WTC11 (cell line): ENCODE measurements at regions of chr11 and their contacts with region 1.

Region 1: DNA sequence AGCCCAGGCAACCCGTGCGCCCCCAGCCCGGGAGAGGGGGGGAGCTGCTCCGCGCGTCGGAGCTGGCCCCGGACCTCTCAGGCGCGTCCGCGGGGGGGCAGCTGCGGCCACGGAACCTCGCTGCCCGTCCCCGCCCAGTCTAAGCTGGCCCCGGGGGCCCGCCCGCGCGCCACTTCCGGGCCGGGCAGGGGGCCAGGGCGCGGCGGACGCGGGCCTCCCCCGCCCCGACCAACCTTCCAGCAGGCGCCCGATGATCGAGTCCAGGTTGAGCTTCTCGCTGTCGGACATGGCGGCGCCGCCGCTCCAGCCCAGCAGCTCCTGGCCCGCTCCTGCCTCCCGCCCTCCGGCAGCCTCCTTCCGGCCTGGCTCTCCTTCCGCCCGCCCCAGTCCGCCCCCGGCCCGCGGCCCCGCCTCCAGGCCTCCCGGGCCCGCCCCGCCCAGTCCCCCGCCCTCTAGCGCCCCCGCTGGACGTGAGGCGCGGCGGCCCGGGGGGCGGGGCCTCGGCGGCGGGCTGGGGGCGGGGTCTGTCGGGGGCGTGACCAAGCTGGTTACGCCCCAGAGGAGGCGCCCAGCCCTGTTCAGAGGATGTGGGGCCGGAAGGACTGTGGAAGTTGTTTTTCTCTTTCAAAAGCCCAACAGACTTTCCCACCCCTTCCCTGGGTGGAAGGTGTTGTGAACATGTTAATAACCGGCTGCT is at the start of gene PPP1CA:
- DNase-seq: peak; percentile 88
- ATAC-seq: peak; percentile 86
- H3K4me3 Mint-ChIP-seq: peak within 1 kb of the TSS; percentile 73
- H3K27ac Mint-ChIP-seq: peak within 1 kb of the TSS; percentile 78
- H3K4me1 Mint-ChIP-seq: peaks cover 34% of the 10 kb centered on the region
- H3K27me3 Mint-ChIP-seq: no peaks in the 10 kb centered on the region
- CTCF ChIP-seq: peak; percentile 46
- total RNA-seq, gene PPP1CA: 220 to 222 TPM (median 221 TPM) in 3 replicates

Region 2: DNA sequence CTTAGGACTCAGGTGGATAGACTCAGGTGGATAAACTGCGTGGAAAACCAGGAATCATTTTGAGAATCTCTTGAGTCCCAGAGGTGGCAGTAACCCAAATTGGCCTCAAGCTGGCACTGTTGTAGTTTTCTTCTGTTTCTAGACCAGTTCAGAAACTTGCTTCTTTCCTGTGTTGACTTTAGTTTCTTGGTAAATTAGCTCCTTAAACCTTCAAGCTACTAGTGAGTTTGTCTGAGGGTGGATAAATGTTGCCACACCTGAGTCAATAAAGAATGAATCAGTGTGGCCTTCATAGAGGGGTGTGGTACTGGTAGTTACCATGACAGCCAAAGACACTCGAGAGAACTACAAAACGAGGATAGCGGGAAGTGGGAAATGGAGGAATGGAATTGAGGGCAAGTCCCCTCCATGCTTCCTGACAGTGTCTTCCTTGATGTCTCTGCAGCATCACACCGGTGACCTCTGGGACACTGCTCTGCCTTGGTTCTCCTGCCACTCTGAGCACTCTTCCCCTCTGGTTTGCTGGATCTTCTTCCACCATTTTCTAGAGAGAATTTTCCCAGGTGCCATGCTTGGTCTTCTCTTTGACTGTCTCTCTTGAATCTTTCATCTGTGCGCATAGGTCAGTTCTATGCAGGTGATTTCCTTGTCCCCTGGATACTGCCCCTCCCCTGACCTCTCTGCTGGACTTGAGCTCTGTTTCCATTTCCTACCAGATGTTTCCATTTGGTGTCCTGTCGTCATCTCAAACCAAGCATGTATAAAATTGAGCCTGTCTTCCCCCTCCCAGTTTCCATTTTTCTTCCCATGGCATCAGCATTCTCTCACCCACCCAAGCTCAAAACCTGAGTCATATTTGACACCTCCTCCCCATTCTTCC is 55.5 kb before region 1 on chr11:
- CTCF ChIA-PET with region 1: interaction called, 23 read pairs
- POLR2A ChIA-PET with region 1: no interaction called
- DNase-seq: no peak
- ATAC-seq: peak; percentile 82
- H3K4me3 Mint-ChIP-seq: no peak overlapping the region
- H3K27ac Mint-ChIP-seq: peak overlapping the region; percentile 41; the same call in 1 of the 2 replicates
- H3K4me1 Mint-ChIP-seq: peaks cover 9% of the 10 kb centered on the region
- H3K27me3 Mint-ChIP-seq: peaks cover 10% of the 10 kb centered on the region
- CTCF ChIP-seq: 0 out of 2 replicates have a peak, but pooled peaks have one; percentile 43

Region 3: GRCh38 chr11:67373925-67374618 is 27.6 kb before region 1 on chr11:
- CTCF ChIA-PET with region 1: interaction called, 19 read pairs
- POLR2A ChIA-PET with region 1: interaction called, 4 read pairs
- DNase-seq: peak; percentile 77
- ATAC-seq: peak; percentile 6
- H3K4me3 Mint-ChIP-seq: peak overlapping the region; percentile 88
- H3K27ac Mint-ChIP-seq: no peak overlapping the region
- H3K4me1 Mint-ChIP-seq: peaks cover 46% of the 10 kb centered on the region
- H3K27me3 Mint-ChIP-seq: peaks cover 82% of the 10 kb centered on the region
- CTCF ChIP-seq: peak; percentile 32; the same call in 1 of the 2 replicates

Region 4: DNA sequence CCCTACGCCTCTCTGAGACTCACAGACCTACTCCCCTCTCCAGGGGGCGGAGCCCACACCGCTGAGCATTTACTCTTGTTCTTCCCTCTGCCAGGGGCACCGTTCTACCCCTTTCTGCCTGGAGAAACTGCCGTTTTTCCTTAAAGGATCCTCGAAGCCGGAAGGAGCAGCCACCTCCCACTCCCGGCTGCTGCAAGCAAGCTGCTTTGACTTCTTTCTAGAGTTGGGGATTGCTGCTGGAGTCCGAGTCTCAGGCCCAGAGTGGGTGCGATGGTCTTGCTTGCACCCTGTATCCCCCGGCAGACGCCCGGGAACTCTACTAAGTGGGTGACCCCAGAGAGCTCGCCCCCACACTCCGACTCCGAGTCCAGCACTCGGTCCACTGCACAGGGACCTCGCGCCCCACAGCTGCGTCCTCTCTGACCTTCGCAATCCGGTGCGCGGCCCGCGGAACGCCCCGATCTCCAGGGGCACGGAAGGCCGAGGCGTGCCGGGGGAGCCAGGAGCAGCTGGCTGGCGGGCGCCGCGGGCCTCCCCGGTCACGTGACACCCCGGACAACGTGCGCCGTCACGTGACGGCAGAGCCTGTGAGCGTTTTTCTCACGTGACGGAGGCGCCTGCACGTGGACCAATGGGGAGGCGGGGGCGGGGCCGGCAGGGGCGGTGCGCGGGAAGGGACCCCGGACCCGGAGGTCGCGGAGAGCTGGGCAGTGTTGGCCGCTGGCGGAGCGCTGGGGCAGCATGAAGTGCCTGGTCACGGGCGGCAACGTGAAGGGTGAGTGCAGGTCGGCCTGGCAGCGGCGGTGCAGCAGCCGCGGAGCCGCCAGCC is 10.1 kb before region 1 on chr11 and contains the start of gene RAD9A:
- CTCF ChIA-PET with region 1: interaction called, 112 read pairs
- POLR2A ChIA-PET with region 1: interaction called, 21 read pairs
- DNase-seq: peak; percentile 93
- ATAC-seq: peak; percentile 52
- H3K4me3 Mint-ChIP-seq: peak within 1 kb of the TSS; percentile 75
- H3K27ac Mint-ChIP-seq: peak within 1 kb of the TSS; percentile 85
- H3K4me1 Mint-ChIP-seq: peaks cover 35% of the 10 kb centered on the region
- H3K27me3 Mint-ChIP-seq: no peaks in the 10 kb centered on the region
- CTCF ChIP-seq: no peak
- total RNA-seq, gene RAD9A: 25.7 to 45.5 TPM (median 26.7 TPM) in 3 replicates

Region 5: GRCh38 chr11:67420646-67421420 is 19.2 kb after region 1 on chr11:
- CTCF ChIA-PET with region 1: interaction called, 45 read pairs
- POLR2A ChIA-PET with region 1: interaction called, 11 read pairs
- DNase-seq: peak; percentile 99
- ATAC-seq: peak; percentile 96
- H3K4me3 Mint-ChIP-seq: peak overlapping the region; percentile 63
- H3K27ac Mint-ChIP-seq: peak overlapping the region; percentile 77
- H3K4me1 Mint-ChIP-seq: peaks cover 19% of the 10 kb centered on the region
- H3K27me3 Mint-ChIP-seq: peaks cover 6% of the 10 kb centered on the region; the same call in 1 of the 2 replicates
- CTCF ChIP-seq: no peak

Region 6: DNA sequence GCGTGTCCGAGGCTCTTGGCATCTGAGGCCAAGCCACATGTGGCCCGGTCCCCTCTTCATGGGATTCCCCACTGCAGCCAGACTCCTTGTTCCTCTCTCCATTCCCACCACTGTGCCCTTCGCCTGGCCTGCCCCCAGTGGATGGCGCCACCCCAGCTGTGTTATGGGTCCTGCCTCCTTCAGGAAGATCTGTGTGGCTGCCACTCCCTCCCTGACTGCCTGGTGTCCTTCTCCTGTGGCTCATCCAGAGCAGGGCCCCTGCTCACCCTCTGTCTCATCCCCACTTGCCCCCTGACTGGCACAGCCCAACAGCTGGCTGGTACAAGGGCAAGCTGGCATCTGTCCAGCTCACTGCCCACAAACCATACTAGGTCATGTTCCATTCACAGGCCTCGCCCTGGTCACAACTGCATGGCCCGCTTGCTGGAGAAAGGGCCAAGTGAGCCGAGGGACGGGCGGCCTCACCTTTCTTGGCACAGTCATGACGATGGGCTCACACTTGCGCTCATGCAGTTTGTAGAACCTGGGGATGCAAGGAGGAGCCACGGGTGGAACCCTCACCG is 37.8 kb after region 1 on chr11:
- CTCF ChIA-PET with region 1: interaction called, 31 read pairs
- POLR2A ChIA-PET with region 1: interaction called, 11 read pairs
- DNase-seq: peak; percentile 55
- ATAC-seq: peak; percentile 7
- H3K4me3 Mint-ChIP-seq: no peak overlapping the region
- H3K27ac Mint-ChIP-seq: peak overlapping the region; percentile 77; the same call in 1 of the 2 replicates
- H3K4me1 Mint-ChIP-seq: peaks cover 16% of the 10 kb centered on the region
- H3K27me3 Mint-ChIP-seq: no peaks in the 10 kb centered on the region
- CTCF ChIP-seq: no peak

Region 7: DNA sequence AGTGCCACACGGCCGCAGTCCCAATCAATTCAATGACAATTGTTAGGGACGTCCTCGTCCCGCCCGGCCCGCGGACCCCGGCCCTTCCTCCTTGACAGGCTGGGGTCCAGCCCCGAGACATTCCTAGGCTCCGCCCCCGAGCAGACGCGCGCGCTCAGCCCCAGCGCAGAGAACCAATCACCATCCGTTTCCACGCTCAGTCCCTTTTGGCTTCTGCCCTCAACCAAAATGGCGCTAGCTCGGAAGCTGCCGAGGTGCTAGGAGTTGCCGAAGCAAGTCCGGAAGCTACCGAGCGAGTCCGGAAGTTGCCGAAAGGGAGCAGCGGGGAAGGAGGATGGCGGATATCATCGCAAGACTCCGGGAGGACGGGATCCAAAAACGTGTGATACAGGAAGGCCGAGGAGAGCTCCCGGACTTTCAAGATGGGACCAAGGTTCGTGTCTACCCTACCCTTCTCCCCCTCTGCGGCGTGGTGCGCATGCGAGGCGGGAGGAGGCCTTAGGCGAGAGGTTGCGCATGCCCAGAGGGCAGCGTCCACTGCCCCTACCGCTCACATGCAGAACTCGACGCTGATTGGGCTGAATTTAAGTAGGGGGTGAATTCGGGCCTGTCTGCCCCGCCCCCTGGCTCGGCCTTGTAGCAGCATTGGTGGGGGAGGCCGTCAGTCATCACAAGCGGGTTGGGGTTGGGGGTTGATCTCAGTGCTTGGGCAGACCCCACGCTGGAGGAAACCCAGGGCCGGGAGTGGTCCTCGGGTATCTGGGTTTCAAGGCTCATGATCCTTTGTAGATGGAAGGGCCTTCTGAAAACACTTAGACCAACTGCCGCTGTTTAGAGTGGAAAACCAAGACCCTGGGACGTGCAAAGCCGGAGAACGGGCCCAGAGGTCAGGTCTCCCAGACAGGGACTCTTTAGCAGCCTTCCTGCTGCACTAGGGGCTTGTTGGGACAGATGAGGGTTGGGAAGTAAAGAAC is 81.5 kb after region 1 on chr11 and contains the start of gene AIP:
- CTCF ChIA-PET with region 1: interaction called, 14 read pairs
- POLR2A ChIA-PET with region 1: interaction called, 3 read pairs
- DNase-seq: peak; percentile 98
- ATAC-seq: peak; percentile 94
- H3K4me3 Mint-ChIP-seq: peak within 1 kb of the TSS; percentile 75
- H3K27ac Mint-ChIP-seq: peak within 1 kb of the TSS; percentile 73
- H3K4me1 Mint-ChIP-seq: peaks cover 19% of the 10 kb centered on the region
- H3K27me3 Mint-ChIP-seq: peaks cover 45% of the 10 kb centered on the region
- CTCF ChIP-seq: no peak
- total RNA-seq, gene AIP: 32.8 to 42.1 TPM (median 40.0 TPM) in 3 replicates

Region 8: DNA sequence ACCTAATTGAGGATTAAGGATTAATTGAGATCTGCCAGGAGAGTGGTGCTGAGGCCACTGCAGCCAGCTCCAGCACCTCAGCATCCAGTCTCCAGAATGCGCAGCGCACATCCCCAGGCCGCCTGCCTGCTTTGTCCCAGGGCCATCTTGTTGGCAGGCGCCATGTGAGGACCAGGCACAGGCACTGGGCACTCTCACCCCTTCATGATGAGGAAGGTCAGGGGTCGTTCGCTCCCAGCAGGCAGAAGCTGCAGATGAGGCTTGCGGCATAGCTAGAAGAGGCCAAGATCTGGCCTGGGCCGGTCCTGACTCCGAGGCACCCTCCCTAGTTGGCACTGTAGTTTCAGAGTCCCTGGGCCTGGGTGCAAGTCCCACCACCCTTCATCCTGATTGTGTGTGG is 115.2 kb after region 1 on chr11:
- CTCF ChIA-PET with region 1: no interaction called
- POLR2A ChIA-PET with region 1: no interaction called
- DNase-seq: no peak
- ATAC-seq: no peak
- H3K4me3 Mint-ChIP-seq: no peak overlapping the region
- H3K27ac Mint-ChIP-seq: no peak overlapping the region
- H3K4me1 Mint-ChIP-seq: no peaks in the 10 kb centered on the region
- H3K27me3 Mint-ChIP-seq: peaks cover 18% of the 10 kb centered on the region
- CTCF ChIP-seq: no peak

Region 9: DNA sequence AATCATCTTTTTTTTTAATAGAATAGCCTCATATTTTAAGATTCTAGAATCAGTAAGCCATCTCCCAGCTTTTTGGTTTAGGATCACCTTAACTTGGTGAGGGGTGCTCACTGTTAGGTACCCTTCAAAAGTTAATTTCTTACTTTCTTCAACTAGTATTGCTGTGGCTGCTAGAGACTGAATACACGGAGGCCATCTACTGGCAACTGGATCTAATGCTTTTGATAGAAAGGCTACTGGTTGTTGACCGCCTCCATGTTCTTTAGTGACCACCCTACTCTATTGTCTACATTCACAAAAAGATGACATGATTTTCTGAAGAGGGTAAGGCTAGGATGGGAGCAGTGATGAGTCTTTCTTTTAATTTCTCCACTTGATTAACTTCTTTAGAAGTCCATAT is 289.5 kb after region 1 on chr11:
- CTCF ChIA-PET with region 1: no interaction called
- POLR2A ChIA-PET with region 1: no interaction called
- DNase-seq: no peak
- ATAC-seq: peak; percentile 47
- H3K4me3 Mint-ChIP-seq: no peak overlapping the region
- H3K27ac Mint-ChIP-seq: no peak overlapping the region
- H3K4me1 Mint-ChIP-seq: no peaks in the 10 kb centered on the region
- H3K27me3 Mint-ChIP-seq: peaks cover 2% of the 10 kb centered on the region; the same call in 1 of the 2 replicates
- CTCF ChIP-seq: no peak